Head of caudate nucleus (tissue), 42 donors: ENCODE measurements at regions of chr7 and their contacts with region 1.

Region 1: DNA sequence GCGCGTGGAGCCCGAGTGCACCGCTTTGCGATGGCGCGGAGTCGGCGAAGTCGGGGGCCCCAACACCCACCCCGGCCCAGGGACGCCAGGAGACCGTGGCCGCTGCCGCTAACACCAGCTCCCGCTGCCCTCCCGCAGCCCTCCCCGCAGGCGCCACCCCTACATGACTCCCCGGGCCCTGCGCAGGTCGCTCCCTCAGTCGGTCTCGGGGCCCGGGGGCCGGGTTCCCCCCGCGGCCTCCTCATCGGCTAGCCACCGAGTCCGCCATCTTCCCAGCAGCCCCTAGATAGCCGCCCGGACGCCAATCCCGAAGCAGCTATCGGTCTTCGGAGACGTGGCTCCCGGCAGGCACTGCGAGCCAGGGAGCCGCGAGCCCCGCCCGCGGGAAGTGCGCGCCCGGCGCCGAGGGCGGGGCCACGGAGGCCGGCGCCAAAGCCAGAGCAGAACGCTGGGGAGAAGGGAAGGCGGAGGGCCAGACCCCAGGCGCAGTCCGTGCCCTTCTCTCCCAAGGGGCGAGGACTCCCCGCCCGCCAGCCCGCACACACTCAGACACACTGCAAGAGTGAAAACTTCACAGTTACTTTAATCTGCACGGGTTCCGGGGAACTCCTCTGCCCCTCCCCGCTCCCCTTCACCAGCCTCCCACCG is at the start of gene FASTK:
- DNase-seq: peak; percentile 87 to 98 (median 96)

Region 2: DNA sequence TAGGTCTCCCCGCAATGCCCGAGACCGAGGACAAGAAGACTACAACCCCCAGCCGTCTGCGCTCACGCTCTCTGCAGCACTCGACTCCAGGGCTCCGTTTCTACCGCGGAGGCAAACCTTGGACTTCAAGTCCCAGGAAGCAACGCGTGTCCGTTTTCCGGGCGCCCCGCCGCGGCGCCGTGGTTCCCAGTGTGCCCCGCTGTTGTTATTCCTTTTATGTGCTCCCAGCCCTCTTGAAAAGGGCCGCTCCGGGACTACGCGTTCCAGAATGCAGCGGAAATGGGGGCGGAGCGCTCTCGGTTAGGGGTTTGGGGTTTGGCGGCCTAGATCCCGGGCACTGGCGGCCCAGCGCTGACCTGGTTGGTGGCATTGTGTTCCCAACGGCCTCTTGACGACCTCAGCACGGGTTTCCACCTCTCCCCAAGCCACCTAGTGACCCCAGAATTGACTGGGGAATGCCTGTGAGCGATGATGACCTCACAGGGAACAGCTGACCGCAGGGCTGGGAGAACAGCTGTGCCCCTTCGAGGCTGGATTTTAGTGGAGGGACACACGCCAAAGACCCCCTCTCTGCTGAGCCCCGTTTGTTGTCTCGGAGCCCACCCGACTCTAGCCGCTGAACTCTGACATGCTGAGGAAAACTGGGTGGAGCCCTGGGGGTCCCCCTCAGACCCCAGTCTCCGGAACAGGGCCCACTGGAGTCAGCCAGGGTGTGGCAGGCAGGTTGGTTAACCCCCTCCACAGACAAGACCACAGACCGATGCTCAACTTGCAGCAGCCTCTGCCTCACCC is 22.5 kb before region 1 on chr7:
- intact Hi-C with region 1: loop called (anchors 2 kb)
- DNase-seq: peak; percentile 97 to 100 (median 100)